H1 (cell line): ENCODE measurements at regions of chr7 and their contacts with region 1.

Region 1: DNA sequence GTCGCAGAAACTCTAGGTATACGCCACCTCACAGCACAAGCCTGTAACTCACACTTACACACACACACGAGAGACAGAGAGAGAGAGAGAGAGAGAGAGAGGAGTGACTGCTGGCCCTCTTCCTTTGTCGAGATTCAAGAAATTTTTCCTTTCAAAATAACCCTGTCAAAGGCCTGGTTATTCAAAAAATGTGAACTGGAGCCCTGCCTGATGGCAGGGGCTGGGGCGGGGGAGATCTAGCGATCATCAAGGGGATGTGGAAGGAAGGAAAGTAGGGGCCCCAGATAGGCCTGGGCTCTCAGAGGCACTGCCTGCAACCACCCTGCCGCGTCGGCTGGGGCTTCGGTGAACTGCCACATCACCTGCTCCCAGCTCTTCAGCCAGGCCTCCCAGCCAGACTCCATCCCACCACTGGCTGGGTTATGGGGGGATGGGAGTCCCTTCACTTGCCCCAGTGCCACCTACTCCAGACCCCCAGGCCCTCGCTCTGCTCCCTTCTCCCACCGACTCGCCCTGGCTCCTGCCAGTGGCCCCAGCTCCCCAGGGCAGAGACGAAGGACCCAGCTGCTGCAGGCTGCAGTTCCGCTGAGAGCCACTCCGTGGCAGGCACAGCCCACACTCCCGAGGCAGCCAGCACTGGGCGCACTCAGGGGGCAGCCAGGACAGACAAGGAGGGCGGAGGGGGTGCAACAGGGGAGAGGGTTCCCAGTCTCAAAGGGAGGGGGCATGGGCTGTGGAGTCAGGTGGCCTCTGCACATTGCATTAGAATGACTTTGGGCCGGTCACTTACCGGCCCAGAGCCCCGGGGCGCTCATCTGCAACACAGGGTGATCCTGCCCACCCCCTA is 15.3 kb downstream of the KCNH2 start:
- DNase-seq: peak in 1 of 2 experiments; percentile 83
- H3K4me3 ChIP-seq: no peak overlapping the region
- H3K27ac ChIP-seq: no peak overlapping the region
- H3K4me1 ChIP-seq: peaks cover 0 to 4% (median 3%) of the 10 kb centered on the region in 4 experiments; a peak in 3 of 7 replicates
- H3K27me3 ChIP-seq: peaks cover 0 to 21% (median 9%) of the 10 kb centered on the region in 4 experiments; a peak in 5 of 7 replicates
- CTCF ChIP-seq: peak in 2 of 3 experiments; percentile 97 to 98; a peak in 3 of 4 replicates
- EP300 ChIP-seq: no peak
- POLR2A ChIP-seq: no peak
- RAD21 ChIP-seq: peak; percentile 97 to 99

Region 2: DNA sequence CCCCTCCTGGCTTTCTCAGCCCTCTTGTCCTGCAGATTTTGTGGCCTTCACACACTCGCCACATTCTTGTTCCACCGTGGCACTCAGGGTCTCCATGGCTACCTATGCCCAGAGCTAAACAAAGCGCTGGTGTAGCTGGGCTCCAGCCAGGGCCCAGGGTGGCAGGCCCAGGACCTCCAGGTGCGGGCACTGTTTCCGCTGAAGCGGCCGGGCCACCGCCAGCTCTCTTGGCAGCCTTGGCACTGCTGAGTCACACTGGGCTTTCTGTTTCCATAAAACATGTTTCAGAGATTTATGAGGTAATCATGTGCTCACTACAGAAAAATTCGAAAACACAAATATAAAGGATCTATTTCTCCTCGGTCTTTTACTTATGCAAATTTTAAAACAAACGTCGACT is 59.2 kb before region 1 on chr7:
- CTCF ChIA-PET with region 1: interaction called, 15 read pairs
- POLR2A ChIA-PET with region 1: no interaction called
- DNase-seq: no peak
- H3K4me3 ChIP-seq: no peak overlapping the region
- H3K27ac ChIP-seq: no peak overlapping the region
- H3K4me1 ChIP-seq: peaks cover 0 to 15% (median 4%) of the 10 kb centered on the region in 4 experiments; a peak in 4 of 7 replicates
- H3K27me3 ChIP-seq: peaks cover 0 to 11% (median 6%) of the 10 kb centered on the region in 4 experiments; a peak in 4 of 7 replicates
- CTCF ChIP-seq: no peak
- EP300 ChIP-seq: no peak
- POLR2A ChIP-seq: no peak
- RAD21 ChIP-seq: no peak

Region 3: GRCh38 chr7:150931199-150931869 is 31.4 kb before region 1 on chr7:
- CTCF ChIA-PET with region 1: interaction called, 45 read pairs
- POLR2A ChIA-PET with region 1: no interaction called
- DNase-seq: no peak
- H3K4me3 ChIP-seq: no peak overlapping the region
- H3K27ac ChIP-seq: no peak overlapping the region
- H3K4me1 ChIP-seq: no peaks in the 10 kb centered on the region
- H3K27me3 ChIP-seq: no peaks in the 10 kb centered on the region
- CTCF ChIP-seq: no peak
- EP300 ChIP-seq: no peak
- POLR2A ChIP-seq: no peak
- RAD21 ChIP-seq: no peak

Region 4: GRCh38 chr7:150988230-150989226 is 25.8 kb after region 1 on chr7:
- CTCF ChIA-PET with region 1: interaction called, 797 read pairs
- POLR2A ChIA-PET with region 1: interaction called, 3 read pairs
- DNase-seq: peak in 1 of 2 experiments; percentile 98
- H3K4me3 ChIP-seq: peak overlapping the region in 3 of 4 experiments; percentile 30 to 55 (median 42); a peak in 7 of 8 replicates
- H3K27ac ChIP-seq: no peak overlapping the region; the same call in 1 of the 2 replicates
- H3K4me1 ChIP-seq: peaks cover 4 to 17% (median 11%) of the 10 kb centered on the region in 4 experiments
- H3K27me3 ChIP-seq: no peaks in the 10 kb centered on the region
- CTCF ChIP-seq: peak in 2 of 3 experiments; percentile 92 to 97; a peak in 3 of 4 replicates
- EP300 ChIP-seq: no peak
- POLR2A ChIP-seq: no peak
- RAD21 ChIP-seq: peak; percentile 89 to 96

Region 5: GRCh38 chr7:151017953-151018420 is 55.2 kb after region 1 on chr7:
- CTCF ChIA-PET with region 1: interaction called, 48 read pairs
- POLR2A ChIA-PET with region 1: no interaction called
- DNase-seq: peak in 1 of 2 experiments; percentile 99
- H3K4me3 ChIP-seq: peak overlapping the region in 2 of 4 experiments; percentile 17 to 50; a peak in 5 of 8 replicates
- H3K27ac ChIP-seq: no peak overlapping the region
- H3K4me1 ChIP-seq: peaks cover 0 to 29% (median 19%) of the 10 kb centered on the region in 4 experiments; a peak in 5 of 7 replicates
- H3K27me3 ChIP-seq: peaks cover 8 to 46% (median 39%) of the 10 kb centered on the region in 4 experiments
- CTCF ChIP-seq: peak in 2 of 3 experiments; percentile 95 to 97; a peak in 3 of 4 replicates
- EP300 ChIP-seq: peak in 1 of 2 experiments; percentile 40; a peak in 1 of 3 replicates
- POLR2A ChIP-seq: no peak
- RAD21 ChIP-seq: peak; percentile 58 to 72

Region 6: GRCh38 chr7:151181011-151181431 is 218.2 kb after region 1 on chr7:
- CTCF ChIA-PET with region 1: no interaction called
- POLR2A ChIA-PET with region 1: no interaction called
- DNase-seq: no peak
- H3K4me3 ChIP-seq: no peak overlapping the region
- H3K27ac ChIP-seq: no peak overlapping the region
- H3K4me1 ChIP-seq: no peaks in the 10 kb centered on the region
- H3K27me3 ChIP-seq: peaks cover 0 to 3% (median 0%) of the 10 kb centered on the region in 4 experiments; a peak in 1 of 7 replicates
- CTCF ChIP-seq: no peak
- EP300 ChIP-seq: no peak
- POLR2A ChIP-seq: no peak
- RAD21 ChIP-seq: no peak